Ovary (tissue), 10 donors: ENCODE measurements at regions of chr17 and their contacts with region 1.

Region 1: DNA sequence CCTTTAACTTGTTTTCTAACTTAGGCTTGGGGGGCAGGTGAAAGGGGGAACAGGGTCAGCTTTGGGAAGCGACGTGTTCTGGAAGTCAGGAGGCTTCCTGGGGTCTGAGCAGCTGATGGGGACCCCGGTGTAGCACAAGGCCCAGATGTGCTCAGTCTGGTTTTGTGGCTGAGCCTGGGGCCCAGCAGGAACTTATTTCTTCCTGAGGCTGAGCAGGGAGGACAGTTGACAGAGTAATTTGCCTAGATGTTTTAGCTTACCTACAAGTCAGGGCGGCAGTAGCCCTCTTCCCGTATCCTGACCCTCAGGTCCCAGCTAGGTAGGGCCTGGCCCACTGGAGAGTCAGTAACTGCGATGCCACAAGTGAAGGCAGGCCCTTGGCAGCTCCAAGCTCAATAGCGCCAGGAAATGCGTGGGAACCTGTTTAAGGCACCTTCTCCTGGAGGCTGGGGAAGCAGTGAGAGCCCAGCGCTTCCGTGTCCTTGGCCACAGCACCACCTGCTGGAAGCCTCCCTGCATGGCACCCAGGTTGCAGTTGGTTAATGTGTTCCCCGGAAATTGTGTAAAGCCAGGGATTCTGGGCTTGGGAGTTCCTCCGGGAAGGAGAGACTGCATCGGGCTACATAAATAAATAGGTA is 5.2 kb downstream of the CCR7 start:
- DNase-seq: peak; percentile 89 to 96 (median 96)
- H3K4me3 ChIP-seq: no peak overlapping the region
- H3K27ac ChIP-seq: peak overlapping the region; percentile 46 to 63
- H3K4me1 ChIP-seq: peaks cover 29% of the 10 kb centered on the region
- H3K27me3 ChIP-seq: no peaks in the 10 kb centered on the region
- CTCF ChIP-seq: peak; percentile 93 to 98 (median 97)
- EP300 ChIP-seq: no peak
- POLR2A ChIP-seq: peak; percentile 26

Region 2: DNA sequence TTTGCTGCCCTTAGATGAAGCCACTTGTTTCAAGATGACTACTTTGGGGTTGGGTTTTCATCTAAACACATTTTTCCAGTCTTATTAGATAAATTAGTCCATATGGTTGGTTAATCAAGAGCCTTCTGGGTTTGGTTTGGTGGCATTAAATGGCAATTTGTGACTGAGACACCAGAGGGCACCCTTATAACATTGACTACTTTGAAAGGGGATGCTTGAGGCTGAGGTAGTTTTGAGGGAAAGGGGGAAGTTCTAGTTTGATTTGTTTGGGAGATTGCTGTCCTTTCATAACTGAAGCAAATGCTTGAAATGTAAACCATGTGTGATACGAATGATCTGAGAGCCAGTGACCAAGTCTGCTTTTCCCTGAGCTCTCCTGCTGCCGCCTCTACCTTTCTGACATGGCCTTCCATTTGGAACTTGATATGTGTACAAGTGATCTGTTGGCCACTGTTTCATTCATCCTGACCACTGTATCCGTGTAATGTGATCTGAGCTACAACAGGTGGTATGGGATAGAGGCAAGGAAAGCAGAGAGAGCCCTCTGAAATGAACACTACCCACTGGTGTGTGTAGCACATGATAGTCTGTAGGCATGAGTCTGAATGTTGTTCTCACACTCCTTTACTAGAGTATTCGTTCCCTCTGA is 256.9 kb before region 1 on chr17:
- intact Hi-C with region 1: loop called in 1 of 4 experiments (anchors 10 kb)
- DNase-seq: peak in 2 of 5 donors; percentile 32 to 68
- H3K4me3 ChIP-seq: no peak overlapping the region
- H3K27ac ChIP-seq: no peak overlapping the region
- H3K4me1 ChIP-seq: peaks cover 21% of the 10 kb centered on the region
- H3K27me3 ChIP-seq: no peaks in the 10 kb centered on the region
- CTCF ChIP-seq: peak; percentile 61 to 82 (median 78)
- EP300 ChIP-seq: no peak
- POLR2A ChIP-seq: no peak

Region 3: GRCh38 chr17:40371261-40371929 is 188.7 kb before region 1 on chr17:
- intact Hi-C with region 1: loop called in 1 of 4 experiments (anchors 10 kb)
- DNase-seq: no peak
- H3K4me3 ChIP-seq: no peak overlapping the region
- H3K27ac ChIP-seq: no peak overlapping the region
- H3K4me1 ChIP-seq: no peaks in the 10 kb centered on the region
- H3K27me3 ChIP-seq: no peaks in the 10 kb centered on the region
- CTCF ChIP-seq: no peak
- EP300 ChIP-seq: no peak
- POLR2A ChIP-seq: no peak

Region 4: DNA sequence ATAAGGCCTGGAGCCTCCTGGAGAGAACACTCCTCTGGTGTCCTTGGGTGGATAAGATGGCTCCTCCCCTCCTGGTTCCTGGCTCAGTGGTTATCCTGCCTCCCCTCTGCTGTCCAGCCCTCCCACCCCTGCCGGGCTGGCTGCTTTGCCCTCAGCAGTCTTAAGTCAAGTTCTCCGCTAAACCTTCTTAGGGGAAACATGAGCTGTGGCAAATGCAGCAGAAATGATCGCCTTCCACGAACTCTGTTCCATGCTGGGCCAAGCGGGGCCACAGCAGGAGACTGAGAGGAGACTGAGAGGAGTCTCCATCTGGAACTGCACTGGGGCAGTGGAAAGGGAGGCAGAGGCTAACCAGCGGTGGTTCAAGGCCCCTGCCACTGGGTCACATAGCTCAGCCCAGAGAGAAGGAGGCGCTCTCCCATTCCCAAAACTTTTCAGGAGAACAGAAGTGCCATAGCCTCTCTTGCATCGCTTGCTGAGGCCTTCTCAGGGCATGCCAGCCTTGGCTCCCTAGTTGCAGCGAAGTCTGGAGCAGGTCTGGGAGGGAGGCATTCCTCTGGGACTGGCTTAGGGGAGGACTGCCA is 85.6 kb before region 1 on chr17:
- intact Hi-C with region 1: loop called in 1 of 4 experiments (anchors 5 kb)
- DNase-seq: peak; percentile 76 to 84 (median 80)
- H3K4me3 ChIP-seq: no peak overlapping the region
- H3K27ac ChIP-seq: peak overlapping the region; percentile 6 to 77
- H3K4me1 ChIP-seq: peaks cover 27% of the 10 kb centered on the region
- H3K27me3 ChIP-seq: no peaks in the 10 kb centered on the region
- CTCF ChIP-seq: peak in 1 of 3 donors; percentile 6
- EP300 ChIP-seq: no peak
- POLR2A ChIP-seq: no peak

Region 5: DNA sequence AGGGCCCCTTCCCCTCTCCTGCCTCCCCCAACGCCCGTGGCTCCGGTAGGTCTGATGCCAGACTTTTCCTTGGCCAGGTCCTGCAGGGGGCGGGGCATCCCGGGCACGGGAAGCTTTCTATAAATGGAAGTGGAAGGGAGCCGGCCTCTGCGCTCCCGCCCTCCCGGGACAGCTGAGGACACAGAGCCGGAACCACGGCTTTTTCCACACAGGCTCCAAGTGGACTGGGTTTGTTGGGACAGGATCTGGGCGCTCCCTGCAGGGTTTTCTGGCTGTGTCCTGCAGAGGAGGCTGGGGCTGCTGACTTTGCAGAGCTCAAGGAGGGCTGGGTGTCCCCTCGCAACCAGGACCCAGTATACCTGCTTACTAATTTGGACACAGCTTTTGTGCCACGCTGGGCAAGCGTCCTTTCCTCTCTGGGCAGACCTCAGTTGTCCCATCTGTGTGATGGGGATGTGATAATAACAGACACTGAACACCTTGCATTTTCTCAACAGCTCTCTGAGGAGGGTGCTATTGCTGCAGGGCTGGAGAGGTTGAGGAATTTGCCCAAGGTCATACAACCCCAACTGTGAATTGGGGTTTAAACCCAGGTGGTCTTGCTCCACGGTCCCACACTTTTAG is 60.4 kb before region 1 on chr17:
- intact Hi-C with region 1: no loop called
- DNase-seq: peak; percentile 82 to 90 (median 84)
- H3K4me3 ChIP-seq: no peak overlapping the region
- H3K27ac ChIP-seq: no peak overlapping the region
- H3K4me1 ChIP-seq: peaks cover 2% of the 10 kb centered on the region
- H3K27me3 ChIP-seq: no peaks in the 10 kb centered on the region
- CTCF ChIP-seq: no peak
- EP300 ChIP-seq: no peak
- POLR2A ChIP-seq: no peak